Thyroid gland (tissue), 4 donors: ENCODE measurements at regions of chr4 and their contacts with region 1.

Region 1: GRCh38 chr4:118865091-118865708 is 23.5 kb upstream of the SYNPO2 start:
- DNase-seq: peak; percentile 56 to 71
- H3K4me3 ChIP-seq: no peak overlapping the region
- H3K27ac ChIP-seq: no peak overlapping the region
- H3K4me1 ChIP-seq: no peaks in the 10 kb centered on the region
- H3K27me3 ChIP-seq: no peaks in the 10 kb centered on the region
- CTCF ChIP-seq: peak; percentile 20 to 80 (median 70)
- POLR2A ChIP-seq: no peak

Region 2: DNA sequence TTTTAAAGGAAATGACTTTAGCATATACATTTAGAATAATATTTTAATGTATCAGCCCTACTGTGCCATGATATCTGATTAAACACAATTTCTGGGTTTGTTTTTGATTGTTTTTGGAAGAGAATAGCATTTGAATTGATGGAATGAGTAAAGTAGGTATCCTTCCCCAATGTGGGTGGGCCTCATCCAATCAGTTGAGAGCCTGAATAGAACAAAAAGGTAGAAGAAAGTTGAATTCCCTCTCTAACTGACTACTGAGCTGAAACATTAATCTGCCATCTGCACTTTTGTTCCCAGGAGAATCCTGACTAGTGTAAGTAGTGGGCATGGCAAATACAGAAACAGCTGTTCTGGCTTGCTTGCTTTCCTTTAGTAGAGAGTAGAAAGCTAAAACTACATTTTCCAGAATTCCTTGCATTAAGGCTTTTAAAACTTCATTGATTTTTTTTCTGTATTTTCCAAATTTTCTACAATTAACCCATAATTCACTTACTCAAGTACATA is 19.6 kb before region 1 on chr4:
- intact Hi-C with region 1: loop called (anchors 2 kb)
- DNase-seq: no peak
- H3K4me3 ChIP-seq: no peak overlapping the region
- H3K27ac ChIP-seq: no peak overlapping the region
- H3K4me1 ChIP-seq: peaks cover 0 to 3% of the 10 kb centered on the region in 2 donors
- H3K27me3 ChIP-seq: no peaks in the 10 kb centered on the region
- CTCF ChIP-seq: no peak
- POLR2A ChIP-seq: no peak